ENCODE measurements at regions of chr3 and their contacts with region 1.

Region 1: GRCh38 chr3:36540888-36541518 is 160.7 kb downstream of the STAC start:
- DNase-seq: peak; percentile 11
- H3K4me3 ChIP-seq: no peak overlapping the region
- H3K27ac ChIP-seq: no peak overlapping the region
- H3K4me1 ChIP-seq: no peaks in the 10 kb centered on the region
- H3K27me3 ChIP-seq: no peaks in the 10 kb centered on the region
- CTCF ChIP-seq: peak; percentile 97 to 99

Region 2: GRCh38 chr3:35965908-35966307 is 575.1 kb before region 1 on chr3:
- CTCF ChIA-PET with region 1: no interaction called
- dilution Hi-C with region 1: no loop called
- in situ Hi-C with region 1: no loop called
- intact Hi-C with region 1: loop called (anchors 2 kb)
- DNase-seq: peak; percentile 14
- H3K4me3 ChIP-seq: no peak overlapping the region
- H3K27ac ChIP-seq: no peak overlapping the region
- H3K4me1 ChIP-seq: no peaks in the 10 kb centered on the region
- H3K27me3 ChIP-seq: peaks cover 5% of the 10 kb centered on the region
- CTCF ChIP-seq: peak; percentile 39 to 62

Region 3: GRCh38 chr3:36257158-36257852 is 283.7 kb before region 1 on chr3:
- CTCF ChIA-PET with region 1: no interaction called
- dilution Hi-C with region 1: no loop called
- in situ Hi-C with region 1: no loop called
- intact Hi-C with region 1: loop called (anchors 2 kb)
- DNase-seq: no peak
- H3K4me3 ChIP-seq: no peak overlapping the region
- H3K27ac ChIP-seq: no peak overlapping the region
- H3K4me1 ChIP-seq: no peaks in the 10 kb centered on the region
- H3K27me3 ChIP-seq: no peaks in the 10 kb centered on the region
- CTCF ChIP-seq: no peak

Region 4: DNA sequence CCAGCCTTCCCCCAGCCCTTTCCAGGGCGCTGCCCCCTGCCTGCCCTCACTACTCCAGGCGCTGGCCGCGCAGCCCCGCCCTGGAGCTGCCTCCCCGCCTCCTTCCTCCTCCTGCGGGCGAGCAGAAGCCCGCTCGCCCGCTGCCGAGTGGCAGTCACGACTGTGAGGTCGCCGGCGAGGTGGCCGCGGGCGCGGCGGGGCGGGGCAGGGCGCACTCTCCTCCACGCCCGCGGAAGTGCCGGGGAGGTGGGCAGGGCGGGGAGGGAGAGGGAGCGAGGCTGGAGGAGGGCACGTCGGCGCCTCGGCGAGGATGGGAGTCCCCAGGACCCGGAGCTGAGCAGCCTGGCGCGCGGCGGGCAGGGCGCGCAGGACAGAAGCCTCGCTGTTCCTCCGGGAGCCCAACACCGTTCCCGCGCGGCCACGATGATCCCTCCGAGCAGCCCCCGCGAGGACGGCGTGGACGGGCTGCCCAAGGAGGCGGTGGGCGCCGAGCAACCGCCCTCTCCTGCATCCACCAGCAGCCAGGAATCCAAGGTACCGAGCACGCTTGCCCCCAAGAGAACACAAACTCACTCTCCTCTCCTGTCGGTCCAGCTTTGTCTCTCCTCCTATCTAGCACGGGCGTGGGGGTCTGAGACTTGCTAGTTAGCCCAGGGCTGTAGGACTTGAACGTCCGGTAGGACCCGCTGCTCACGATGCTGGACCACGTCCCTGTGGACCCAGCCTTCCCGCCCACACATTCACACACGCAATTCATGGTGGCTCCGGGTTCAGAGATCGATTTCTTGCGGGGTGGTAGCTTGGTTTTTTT is 160.6 kb before region 1 on chr3 and contains the start of gene STAC:
- CTCF ChIA-PET with region 1: no interaction called
- dilution Hi-C with region 1: no loop called
- in situ Hi-C with region 1: no loop called
- intact Hi-C with region 1: loop called (anchors 5 kb)
- DNase-seq: peak; percentile 60
- H3K4me3 ChIP-seq: peak within 1 kb of the TSS; percentile 75 to 97 (median 81)
- H3K27ac ChIP-seq: peak within 1 kb of the TSS; percentile 5
- H3K4me1 ChIP-seq: peaks cover 12% of the 10 kb centered on the region
- H3K27me3 ChIP-seq: no peaks in the 10 kb centered on the region
- CTCF ChIP-seq: no peak
- total RNA-seq, gene STAC: 19.3 to 25.3 TPM

Region 5: DNA sequence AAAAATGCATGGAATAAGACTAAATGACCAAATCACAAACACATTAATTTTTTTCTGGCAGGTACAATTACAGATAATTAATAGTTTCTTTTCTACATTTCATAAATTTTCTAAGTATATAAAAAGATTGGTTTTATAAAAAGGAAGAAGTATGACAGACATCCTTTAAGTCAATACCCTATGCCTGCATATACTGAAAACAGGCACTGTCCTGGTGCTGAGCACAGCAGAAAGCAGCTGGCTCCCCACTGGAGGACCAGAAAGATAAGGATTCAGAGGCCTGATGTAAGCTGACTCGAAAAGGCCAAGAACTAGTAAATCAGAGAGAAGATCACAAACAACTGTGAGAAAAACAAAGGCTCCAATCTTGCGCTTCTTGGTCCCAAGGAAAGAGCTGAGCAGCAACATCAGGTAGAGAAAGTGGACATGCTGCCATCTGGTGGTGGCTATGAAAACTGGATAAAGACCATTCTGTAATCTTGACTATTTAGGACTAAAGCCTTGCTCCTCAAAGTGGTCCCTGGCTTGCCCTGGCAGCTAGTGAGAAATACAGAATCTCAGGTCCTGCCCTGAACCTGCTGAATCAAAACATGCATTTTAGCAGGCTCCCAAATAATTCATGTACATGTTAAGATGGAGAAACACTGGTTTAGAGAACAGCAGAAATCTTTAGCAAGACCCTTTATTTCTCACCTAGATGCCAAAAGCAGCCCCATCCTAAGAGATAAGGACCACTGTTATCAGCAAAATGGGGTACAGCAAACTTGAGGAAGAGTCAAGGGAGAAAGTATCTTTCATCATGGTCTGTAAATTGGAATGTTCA is 327.8 kb after region 1 on chr3:
- CTCF ChIA-PET with region 1: no interaction called
- dilution Hi-C with region 1: no loop called
- in situ Hi-C with region 1: no loop called
- intact Hi-C with region 1: no loop called
- DNase-seq: peak; percentile 45
- H3K4me3 ChIP-seq: no peak overlapping the region
- H3K27ac ChIP-seq: no peak overlapping the region
- H3K4me1 ChIP-seq: no peaks in the 10 kb centered on the region
- H3K27me3 ChIP-seq: no peaks in the 10 kb centered on the region
- CTCF ChIP-seq: peak; percentile 74 to 82